ENCODE measurements at regions of chr5 and their contacts with region 1.

Region 1: DNA sequence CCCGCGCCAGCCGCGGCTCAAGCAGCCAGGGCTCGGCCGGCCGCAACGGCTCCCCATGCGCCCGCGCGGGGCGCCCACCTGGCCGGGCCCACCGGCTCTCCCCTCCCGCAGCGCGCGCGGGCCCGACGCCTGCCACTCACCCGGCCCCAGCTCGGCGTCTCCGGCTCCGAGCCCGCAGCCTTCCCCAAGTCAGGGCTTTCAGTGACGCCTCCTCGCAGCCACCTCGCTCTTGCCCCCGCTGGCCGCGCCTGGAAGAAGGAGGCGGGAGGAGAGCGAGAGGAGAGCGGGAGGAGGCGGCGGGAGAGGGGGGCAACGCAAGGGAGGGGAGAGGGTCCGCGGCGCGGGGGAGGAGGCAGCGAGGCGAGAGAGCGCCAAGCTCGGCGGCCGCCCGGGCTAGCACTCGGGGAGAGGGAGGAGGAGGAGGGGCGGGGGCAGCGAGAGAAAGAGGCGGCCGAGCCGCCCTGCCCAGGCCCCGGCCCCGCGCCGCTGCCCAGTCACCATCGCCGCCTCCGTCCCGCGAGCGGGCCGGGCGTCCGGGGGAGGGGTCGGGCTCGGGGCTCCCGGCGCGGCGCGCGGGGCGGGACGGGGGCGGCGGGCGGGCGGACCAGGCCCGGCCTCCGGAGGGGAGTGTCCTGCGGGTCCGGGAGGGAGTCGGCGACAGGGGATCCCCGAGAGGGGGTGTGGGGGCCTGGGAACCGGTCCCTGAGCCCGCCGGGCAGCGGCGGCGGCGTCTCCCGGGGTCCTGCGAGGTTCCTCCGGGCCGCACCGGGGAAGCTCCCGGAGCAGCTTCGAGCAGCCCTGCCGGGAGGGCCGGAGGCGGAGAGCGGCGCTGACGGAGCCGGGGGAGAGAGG is at the start of gene LHFPL2:
- DNase-seq: peak; percentile 63
- ATAC-seq: peak; percentile 69
- H3K4me3 Mint-ChIP-seq: peak within 1 kb of the TSS; percentile 83
- H3K27ac Mint-ChIP-seq: peak within 1 kb of the TSS; percentile 73
- H3K4me1 Mint-ChIP-seq: peaks cover 25% of the 10 kb centered on the region
- H3K27me3 Mint-ChIP-seq: no peaks in the 10 kb centered on the region
- CTCF ChIP-seq: no peak
- total RNA-seq, gene LHFPL2: 11.0 and 12.0 TPM in 2 replicates

Region 2: DNA sequence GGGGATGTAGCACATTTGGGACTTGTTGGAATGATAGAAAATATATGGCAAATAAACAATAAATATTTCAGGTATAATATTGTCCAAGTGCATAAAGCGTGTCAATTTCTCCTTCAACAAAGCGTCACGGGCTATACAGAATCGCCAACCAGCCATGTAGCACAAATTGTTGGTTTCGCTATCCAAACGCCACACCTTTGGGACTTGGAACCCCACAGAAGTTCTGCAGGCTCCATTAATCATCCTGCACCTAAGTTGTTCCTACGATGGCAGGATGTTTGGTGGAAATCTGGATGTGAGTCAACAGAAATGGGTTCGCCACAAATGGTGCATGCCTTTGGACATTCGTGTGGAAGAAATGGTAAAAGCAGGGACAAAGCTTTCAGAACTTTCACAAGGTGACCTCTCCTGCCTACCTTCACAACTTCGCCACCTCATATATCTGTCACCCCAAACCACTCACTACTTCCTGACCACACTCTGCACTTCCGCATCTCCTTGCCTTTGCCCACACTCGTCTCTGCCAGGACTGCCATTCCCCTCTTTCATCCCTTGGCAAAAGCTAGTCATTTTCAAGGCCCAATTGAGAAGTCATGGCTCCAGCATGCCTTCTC is 95.7 kb before region 1 on chr5:
- CTCF ChIA-PET with region 1: no interaction called
- POLR2A ChIA-PET with region 1: no interaction called
- intact Hi-C with region 1: no loop called
- DNase-seq: no peak
- ATAC-seq: no peak
- H3K4me3 Mint-ChIP-seq: no peak overlapping the region
- H3K27ac Mint-ChIP-seq: no peak overlapping the region
- H3K4me1 Mint-ChIP-seq: peaks cover 23% of the 10 kb centered on the region
- H3K27me3 Mint-ChIP-seq: no peaks in the 10 kb centered on the region
- CTCF ChIP-seq: no peak

Region 3: DNA sequence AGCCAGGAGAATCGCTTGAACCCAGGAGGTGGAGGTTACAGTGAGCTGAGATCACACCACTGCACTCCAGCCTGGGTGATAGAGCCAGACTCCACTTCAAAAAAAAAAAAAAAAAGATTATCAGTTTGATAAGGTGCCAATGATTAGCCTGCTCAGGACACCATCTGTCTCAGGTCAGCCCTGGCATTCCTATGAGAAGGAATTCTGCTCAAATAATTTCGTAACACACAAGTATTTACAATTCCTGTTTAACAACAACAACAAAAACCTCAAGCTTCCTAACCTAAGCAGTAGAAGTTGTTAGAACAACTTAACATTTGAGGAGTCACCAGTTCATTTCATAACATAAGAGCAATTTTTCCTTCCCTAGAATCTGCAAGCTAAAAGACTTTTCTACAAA is 85.0 kb before region 1 on chr5:
- CTCF ChIA-PET with region 1: no interaction called
- POLR2A ChIA-PET with region 1: interaction called, 3 read pairs
- intact Hi-C with region 1: loop called (anchors 1 kb)
- DNase-seq: no peak
- ATAC-seq: no peak
- H3K4me3 Mint-ChIP-seq: no peak overlapping the region
- H3K27ac Mint-ChIP-seq: no peak overlapping the region
- H3K4me1 Mint-ChIP-seq: peaks cover 12% of the 10 kb centered on the region
- H3K27me3 Mint-ChIP-seq: no peaks in the 10 kb centered on the region
- CTCF ChIP-seq: no peak

Region 4: GRCh38 chr5:78574731-78575161 is 73.8 kb before region 1 on chr5:
- CTCF ChIA-PET with region 1: no interaction called
- POLR2A ChIA-PET with region 1: interaction called, 8 read pairs
- intact Hi-C with region 1: loop called (anchors 2 kb)
- DNase-seq: no peak
- ATAC-seq: peak; percentile 63
- H3K4me3 Mint-ChIP-seq: no peak overlapping the region
- H3K27ac Mint-ChIP-seq: peak overlapping the region; percentile 82
- H3K4me1 Mint-ChIP-seq: peaks cover 27% of the 10 kb centered on the region
- H3K27me3 Mint-ChIP-seq: no peaks in the 10 kb centered on the region
- CTCF ChIP-seq: no peak

Region 5: GRCh38 chr5:78757269-78758053 is 108.9 kb after region 1 on chr5:
- CTCF ChIA-PET with region 1: no interaction called
- POLR2A ChIA-PET with region 1: interaction called, 19 read pairs
- intact Hi-C with region 1: loop called (anchors 1 kb)
- DNase-seq: no peak
- ATAC-seq: peak; percentile 38
- H3K4me3 Mint-ChIP-seq: peak overlapping the region; percentile 64
- H3K27ac Mint-ChIP-seq: peak overlapping the region; percentile 95
- H3K4me1 Mint-ChIP-seq: peaks cover 78% of the 10 kb centered on the region
- H3K27me3 Mint-ChIP-seq: no peaks in the 10 kb centered on the region
- CTCF ChIP-seq: no peak

Region 6: DNA sequence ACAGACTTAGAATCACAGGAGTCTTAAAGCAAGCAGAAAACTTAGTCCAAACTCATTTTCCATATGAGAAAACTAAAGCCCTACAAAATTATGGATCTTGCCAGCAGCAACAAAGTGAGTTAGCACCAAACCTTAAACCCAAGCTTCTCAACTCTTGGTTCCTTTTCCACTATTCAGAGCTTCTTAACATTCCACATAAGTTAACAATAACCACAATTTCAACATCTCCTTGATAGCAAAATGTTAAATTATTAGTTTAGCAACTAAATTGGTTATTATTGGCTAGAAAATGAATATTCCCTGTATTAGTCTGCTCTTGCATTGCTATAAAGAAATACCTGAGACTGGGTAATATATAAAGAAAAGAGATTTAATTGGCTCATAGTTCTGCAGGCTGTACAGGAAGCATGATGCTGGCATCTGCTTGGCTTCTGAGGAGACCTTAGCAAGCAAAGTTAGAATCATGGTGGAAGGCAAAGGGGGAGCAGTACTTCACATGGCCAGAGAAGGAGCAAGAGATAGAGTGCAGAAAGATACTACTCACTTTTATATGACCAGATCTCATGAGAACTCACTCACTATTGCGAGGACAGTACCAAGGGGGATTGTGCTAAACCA is 362.7 kb after region 1 on chr5:
- CTCF ChIA-PET with region 1: no interaction called
- POLR2A ChIA-PET with region 1: no interaction called
- intact Hi-C with region 1: no loop called
- DNase-seq: no peak
- ATAC-seq: no peak
- H3K4me3 Mint-ChIP-seq: no peak overlapping the region
- H3K27ac Mint-ChIP-seq: no peak overlapping the region
- H3K4me1 Mint-ChIP-seq: no peaks in the 10 kb centered on the region
- H3K27me3 Mint-ChIP-seq: peaks cover 9% of the 10 kb centered on the region
- CTCF ChIP-seq: no peak

Measured in activated B cell treated with CpG ODN at 0.5 μM for 24 hours (primary cell).